Activated CD4-positive, alpha-beta memory T cell treated with anti-CD3 and anti-CD28 coated beads, Interleukin-2, amount 10 ng/mL, durations not matched to agents 7 days and 5 days (primary cell): ENCODE measurements at regions of chr6 and their contacts with region 1.

Region 1: DNA sequence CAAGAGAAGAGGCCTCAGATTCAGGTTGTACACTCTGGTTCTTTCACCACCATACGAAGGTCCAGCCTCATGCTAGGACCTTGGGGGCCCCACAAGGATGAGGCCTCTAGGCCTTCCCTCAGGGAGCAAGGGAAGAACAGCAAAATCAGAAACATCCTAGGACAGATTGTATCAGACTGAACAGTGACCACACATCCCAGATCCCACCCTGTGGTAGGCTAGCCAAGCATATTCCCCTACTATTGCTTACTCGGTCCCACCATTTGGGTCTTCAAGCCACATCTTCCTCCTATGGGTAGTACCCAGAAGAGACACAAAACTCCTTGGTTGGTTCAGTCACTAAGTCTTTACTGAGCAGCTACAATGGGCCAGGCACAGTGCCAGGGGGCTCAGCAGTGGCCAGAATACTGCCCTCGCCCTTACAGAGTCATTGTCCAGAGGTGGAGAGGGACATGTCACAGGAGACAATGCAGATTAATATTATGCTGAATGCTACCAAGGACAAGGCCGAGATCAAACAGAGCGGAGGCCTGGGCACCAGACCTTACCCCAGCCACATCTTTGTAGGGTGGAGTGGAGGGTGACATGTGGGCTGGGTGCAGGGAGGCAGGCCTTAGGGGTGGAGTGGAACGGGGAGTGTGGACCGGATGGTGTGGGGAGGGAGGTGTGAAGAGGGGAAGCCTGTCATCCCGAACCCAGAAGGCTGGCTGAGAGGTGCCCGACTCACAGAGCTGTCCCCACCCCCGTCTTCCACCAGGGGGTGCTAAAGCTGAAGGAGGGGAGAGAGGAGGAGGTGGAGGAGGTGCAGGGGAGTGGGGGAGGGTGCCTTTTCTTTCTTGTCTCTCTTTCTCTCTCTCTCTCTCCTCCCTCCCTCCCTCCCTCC is 6.8 kb upstream of the MAPK13 start:
- DNase-seq: peak; percentile 96
- H3K4me3 Mint-ChIP-seq: peak overlapping the region; percentile 22
- H3K27ac Mint-ChIP-seq: peak overlapping the region; percentile 71
- H3K4me1 Mint-ChIP-seq: peaks cover 79% of the 10 kb centered on the region
- H3K27me3 Mint-ChIP-seq: no peaks in the 10 kb centered on the region

Region 2: DNA sequence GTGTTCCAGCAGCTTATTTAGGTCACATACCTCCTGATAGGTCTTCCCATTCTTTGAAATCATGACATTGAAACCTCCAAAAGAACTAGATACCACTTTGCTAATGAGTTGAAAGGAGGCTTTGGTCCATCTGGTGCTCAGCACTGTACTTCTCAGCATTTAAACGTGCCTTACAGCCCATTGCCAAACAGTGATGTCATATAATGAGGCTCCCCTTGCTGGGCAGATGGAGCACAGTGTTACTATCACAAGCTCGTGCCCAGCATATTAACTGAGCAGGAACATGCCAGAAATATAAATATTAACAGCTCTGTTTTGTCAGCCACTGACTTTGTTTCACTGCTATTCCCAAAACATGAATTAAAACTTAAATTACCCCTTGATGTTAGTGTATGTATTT is 18.7 kb before region 1 on chr6:
- CTCF ChIA-PET with region 1: interaction called, 10 read pairs
- POLR2A ChIA-PET with region 1: interaction called, 81 read pairs
- DNase-seq: no peak
- H3K4me3 Mint-ChIP-seq: no peak overlapping the region
- H3K27ac Mint-ChIP-seq: no peak overlapping the region
- H3K4me1 Mint-ChIP-seq: peaks cover 35% of the 10 kb centered on the region
- H3K27me3 Mint-ChIP-seq: no peaks in the 10 kb centered on the region

Region 3: DNA sequence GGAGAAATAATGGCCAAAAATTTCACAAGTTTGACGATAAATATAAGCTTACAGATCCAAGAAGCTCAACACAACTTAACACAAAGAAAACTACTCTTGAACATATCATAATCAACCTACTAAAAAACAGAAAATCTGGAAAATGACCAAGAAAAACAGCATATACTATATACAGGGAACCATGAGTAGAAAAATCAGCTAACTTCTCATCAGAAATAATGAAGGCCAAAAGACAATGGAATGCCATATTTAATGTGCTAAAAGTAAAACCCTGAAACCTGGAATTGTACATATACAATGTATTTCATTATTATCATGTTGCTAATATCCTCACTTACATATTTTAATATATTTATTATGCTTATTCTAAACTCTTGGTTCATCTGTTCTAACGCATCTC is 32.2 kb after region 1 on chr6:
- CTCF ChIA-PET with region 1: no interaction called
- POLR2A ChIA-PET with region 1: no interaction called
- DNase-seq: no peak
- H3K4me3 Mint-ChIP-seq: no peak overlapping the region
- H3K27ac Mint-ChIP-seq: no peak overlapping the region
- H3K4me1 Mint-ChIP-seq: peaks cover under 1% of the 10 kb centered on the region
- H3K27me3 Mint-ChIP-seq: no peaks in the 10 kb centered on the region

Region 4: GRCh38 chr6:36169023-36170007 is 45.8 kb after region 1 on chr6:
- CTCF ChIA-PET with region 1: no interaction called
- POLR2A ChIA-PET with region 1: interaction called, 12 read pairs
- DNase-seq: no peak
- H3K4me3 Mint-ChIP-seq: no peak overlapping the region
- H3K27ac Mint-ChIP-seq: peak overlapping the region; percentile 61
- H3K4me1 Mint-ChIP-seq: peaks cover 23% of the 10 kb centered on the region
- H3K27me3 Mint-ChIP-seq: no peaks in the 10 kb centered on the region

Region 5: GRCh38 chr6:36196880-36197548 is 73.5 kb after region 1 on chr6:
- CTCF ChIA-PET with region 1: interaction called, 9 read pairs
- POLR2A ChIA-PET with region 1: interaction called, 31 read pairs
- DNase-seq: peak; percentile 99
- H3K4me3 Mint-ChIP-seq: peak overlapping the region; percentile 85
- H3K27ac Mint-ChIP-seq: peak overlapping the region; percentile 87
- H3K4me1 Mint-ChIP-seq: peaks cover 33% of the 10 kb centered on the region
- H3K27me3 Mint-ChIP-seq: peaks cover 7% of the 10 kb centered on the region